ENCODE measurements at regions of chr13 and their contacts with region 1.

Region 1: GRCh38 chr13:50284540-50284939 is 269.3 kb downstream of the KCNRG start:
- DNase-seq: no peak
- H3K4me3 ChIP-seq: no peak overlapping the region
- H3K4me3 Mint-ChIP-seq: no peak overlapping the region
- H3K27ac Mint-ChIP-seq: no peak overlapping the region
- H3K4me1 ChIP-seq: peaks cover 9% of the 10 kb centered on the region; the same call in 1 of the 2 replicates
- H3K4me1 Mint-ChIP-seq: peaks cover 15% of the 10 kb centered on the region
- H3K27me3 ChIP-seq: no peaks in the 10 kb centered on the region
- H3K27me3 Mint-ChIP-seq: no peaks in the 10 kb centered on the region
- CTCF ChIP-seq: no peak

Region 2: GRCh38 chr13:50203256-50203941 is 81.1 kb before region 1 on chr13:
- CTCF ChIA-PET with region 1: no interaction called
- POLR2A ChIA-PET with region 1: interaction called, 15 read pairs
- intact Hi-C with region 1: no loop called
- DNase-seq: no peak
- H3K4me3 ChIP-seq: no peak overlapping the region
- H3K4me3 Mint-ChIP-seq: no peak overlapping the region
- H3K27ac Mint-ChIP-seq: no peak overlapping the region
- H3K4me1 ChIP-seq: no peaks in the 10 kb centered on the region
- H3K4me1 Mint-ChIP-seq: peaks cover 1% of the 10 kb centered on the region
- H3K27me3 ChIP-seq: no peaks in the 10 kb centered on the region
- H3K27me3 Mint-ChIP-seq: no peaks in the 10 kb centered on the region
- CTCF ChIP-seq: no peak